Naive thymus-derived CD4-positive, alpha-beta T cell (primary cell): ENCODE measurements at regions of chr5 and their contacts with region 1.

Region 1: GRCh38 chr5:135560858-135561257 is 17.9 kb downstream of the CXCL14 start:
- DNase-seq: peak; percentile 14 to 56 (median 44)
- ATAC-seq: peak; percentile 84
- H3K4me3 ChIP-seq: no peak overlapping the region
- H3K4me3 Mint-ChIP-seq: peak overlapping the region in 1 of 10 donors; percentile 15
- H3K27ac ChIP-seq: no peak overlapping the region
- H3K27ac Mint-ChIP-seq: no peak overlapping the region
- H3K4me1 ChIP-seq: no peaks in the 10 kb centered on the region
- H3K4me1 Mint-ChIP-seq: peaks cover 0 to 9% (median 7%) of the 10 kb centered on the region in 7 donors
- H3K27me3 ChIP-seq: no peaks in the 10 kb centered on the region
- H3K27me3 Mint-ChIP-seq: peaks cover 25 to 40% (median 36%) of the 10 kb centered on the region in 5 donors

Region 2: DNA sequence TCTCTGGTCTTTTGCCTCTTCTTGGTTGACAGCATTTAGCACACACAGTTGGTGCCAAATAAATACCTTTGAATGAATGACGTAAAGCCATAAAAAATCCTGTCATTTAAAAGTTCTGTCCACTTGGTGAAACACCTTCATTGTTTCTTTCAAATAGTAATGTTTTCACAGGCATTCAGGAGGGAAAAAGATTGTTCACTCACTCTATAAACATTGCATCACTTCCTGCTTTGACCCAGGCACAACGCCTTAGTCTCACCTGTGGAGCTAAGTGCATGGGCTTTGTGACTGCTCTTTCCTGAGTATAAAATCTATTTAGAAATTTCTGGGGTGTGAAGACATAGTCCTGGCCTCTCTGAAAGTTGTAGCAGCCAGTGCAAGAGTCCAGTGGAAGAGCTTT is 106.8 kb after region 1 on chr5:
- CTCF ChIA-PET with region 1: no interaction called
- POLR2A ChIA-PET with region 1: no interaction called
- intact Hi-C with region 1: no loop called
- DNase-seq: no peak
- ATAC-seq: no peak
- H3K4me3 ChIP-seq: no peak overlapping the region
- H3K4me3 Mint-ChIP-seq: no peak overlapping the region
- H3K27ac ChIP-seq: no peak overlapping the region
- H3K27ac Mint-ChIP-seq: no peak overlapping the region
- H3K4me1 ChIP-seq: no peaks in the 10 kb centered on the region
- H3K4me1 Mint-ChIP-seq: peaks cover 0 to 4% (median 0%) of the 10 kb centered on the region in 7 donors
- H3K27me3 ChIP-seq: peaks cover 0 to 2% of the 10 kb centered on the region in 2 donors
- H3K27me3 Mint-ChIP-seq: peaks cover 16 to 58% (median 30%) of the 10 kb centered on the region in 5 donors

Region 3: DNA sequence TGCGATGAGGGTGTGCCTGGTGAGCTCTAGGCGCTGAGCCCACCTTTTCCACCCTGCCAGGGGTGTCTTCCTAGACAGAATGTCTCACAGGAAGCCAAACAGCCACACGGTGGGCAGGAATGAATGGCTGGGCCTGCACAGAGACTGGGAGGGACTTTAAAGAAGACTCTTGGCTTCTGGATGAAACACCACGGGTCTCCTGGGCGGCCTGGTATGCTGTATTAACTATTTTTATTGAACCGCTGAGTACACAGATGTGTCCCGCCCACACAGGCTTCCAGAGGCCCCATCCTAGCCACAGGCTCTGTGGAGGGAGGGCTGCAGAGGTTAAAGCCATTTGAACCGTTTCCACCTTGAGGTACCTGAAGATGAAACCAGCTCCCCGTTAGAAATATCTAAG is 133.2 kb after region 1 on chr5:
- CTCF ChIA-PET with region 1: no interaction called
- POLR2A ChIA-PET with region 1: no interaction called
- intact Hi-C with region 1: no loop called
- DNase-seq: no peak
- ATAC-seq: no peak
- H3K4me3 ChIP-seq: no peak overlapping the region
- H3K4me3 Mint-ChIP-seq: no peak overlapping the region
- H3K27ac ChIP-seq: no peak overlapping the region
- H3K27ac Mint-ChIP-seq: no peak overlapping the region
- H3K4me1 ChIP-seq: no peaks in the 10 kb centered on the region
- H3K4me1 Mint-ChIP-seq: no peaks in the 10 kb centered on the region
- H3K27me3 ChIP-seq: no peaks in the 10 kb centered on the region
- H3K27me3 Mint-ChIP-seq: peaks cover 2 to 48% (median 13%) of the 10 kb centered on the region in 5 donors

Region 4: DNA sequence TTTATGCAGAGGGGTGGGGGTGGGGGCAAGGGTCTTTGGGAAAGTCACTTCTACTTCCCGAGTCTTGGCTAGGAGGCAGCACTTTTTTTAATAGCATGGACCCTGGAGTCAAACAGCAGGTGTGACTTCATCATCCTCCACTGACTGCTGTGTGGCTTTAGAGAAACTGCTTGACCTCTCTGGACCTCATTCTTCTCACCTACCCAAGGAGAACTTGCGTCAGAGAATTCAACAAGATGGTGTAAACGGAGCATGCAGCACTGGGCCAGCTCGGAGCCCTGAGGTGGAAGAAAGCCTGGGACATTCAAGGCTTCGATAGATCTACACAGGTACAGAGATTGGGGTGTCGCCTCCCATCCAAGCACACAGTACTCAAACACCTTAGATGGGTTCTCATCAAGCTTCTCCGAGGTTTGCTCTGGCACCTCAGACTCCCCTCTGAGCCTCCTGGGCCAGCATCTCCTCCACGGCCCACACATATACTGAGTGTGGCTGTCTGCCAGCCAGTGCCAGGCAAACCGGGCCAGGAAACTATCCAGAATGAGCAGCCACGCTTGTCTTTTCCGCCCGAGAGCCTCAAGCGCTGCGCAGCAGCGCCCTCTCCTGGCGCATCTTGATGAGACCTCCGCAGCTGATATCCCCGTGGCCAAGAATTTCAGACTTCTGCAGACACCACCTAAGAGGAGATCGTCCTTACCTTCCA is 269.0 kb after region 1 on chr5:
- CTCF ChIA-PET with region 1: no interaction called
- POLR2A ChIA-PET with region 1: no interaction called
- intact Hi-C with region 1: loop called in 1 of 2 experiments (anchors 2 kb)
- DNase-seq: peak in 1 of 9 donors; percentile 50
- ATAC-seq: no peak
- H3K4me3 ChIP-seq: no peak overlapping the region
- H3K4me3 Mint-ChIP-seq: no peak overlapping the region
- H3K27ac ChIP-seq: no peak overlapping the region
- H3K27ac Mint-ChIP-seq: no peak overlapping the region
- H3K4me1 ChIP-seq: no peaks in the 10 kb centered on the region
- H3K4me1 Mint-ChIP-seq: peaks cover 0 to 7% (median 5%) of the 10 kb centered on the region in 7 donors
- H3K27me3 ChIP-seq: no peaks in the 10 kb centered on the region
- H3K27me3 Mint-ChIP-seq: peaks cover 32 to 48% (median 37%) of the 10 kb centered on the region in 5 donors